K562 (cell line): ENCODE measurements at regions of chr17 and their contacts with region 1.

Region 1: DNA sequence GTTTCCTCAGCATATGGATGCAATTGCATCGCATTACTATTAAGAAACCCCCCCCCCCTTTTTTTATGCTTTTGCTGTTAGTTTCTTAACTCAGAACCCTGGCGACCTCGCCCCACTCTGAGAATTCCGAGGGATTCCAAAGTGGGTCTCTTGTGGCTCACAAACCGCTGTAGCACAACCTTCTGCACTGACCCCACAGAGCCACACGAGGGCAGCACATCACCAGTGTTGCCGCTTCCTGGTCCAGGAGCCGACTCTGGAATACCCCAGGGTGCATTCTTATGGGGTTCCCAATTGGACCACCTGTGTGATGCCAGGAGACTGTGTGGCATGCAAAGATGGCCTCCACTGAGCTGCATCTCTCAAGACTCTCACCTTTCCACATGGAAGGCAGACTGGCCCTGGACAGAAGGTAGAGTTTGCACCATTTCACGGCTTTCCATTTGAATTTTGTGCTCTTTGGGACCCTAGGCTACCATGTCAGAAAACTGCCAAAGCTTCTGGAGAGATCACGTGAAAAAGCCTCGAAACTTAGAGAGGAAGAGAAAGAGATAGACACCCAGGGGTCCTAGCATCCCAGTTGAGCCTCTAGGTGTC is 432.7 kb upstream of the ASIC2 start:
- DNase-seq: peak; percentile 66 to 75 (median 67)
- ATAC-seq: peak; percentile 85
- H3K4me3 ChIP-seq: no peak overlapping the region
- H3K27ac ChIP-seq: no peak overlapping the region
- H3K4me1 ChIP-seq: no peaks in the 10 kb centered on the region
- H3K27me3 ChIP-seq: peaks cover 0 to 7% of the 10 kb centered on the region in 2 experiments; a peak in 1 of 5 replicates
- CTCF ChIP-seq: peak; percentile 82 to 84 (median 83)
- EP300 ChIP-seq: no peak
- POLR2A ChIP-seq: no peak
- RAD21 ChIP-seq: peak; percentile 55 to 71

Region 2: GRCh38 chr17:33750943-33751701 is 25.3 kb after region 1 on chr17:
- CTCF ChIA-PET with region 1: interaction called, 16 read pairs
- POLR2A ChIA-PET with region 1: no interaction called
- in situ Hi-C with region 1: no loop called
- intact Hi-C with region 1: loop called (anchors 1 kb)
- DNase-seq: peak; percentile 51 to 67 (median 63)
- ATAC-seq: peak; percentile 84
- H3K4me3 ChIP-seq: no peak overlapping the region
- H3K27ac ChIP-seq: no peak overlapping the region
- H3K4me1 ChIP-seq: no peaks in the 10 kb centered on the region
- H3K27me3 ChIP-seq: no peaks in the 10 kb centered on the region; a peak in 1 of 5 replicates
- CTCF ChIP-seq: peak; percentile 85 to 94 (median 93)
- EP300 ChIP-seq: no peak
- POLR2A ChIP-seq: no peak
- RAD21 ChIP-seq: peak; percentile 69 to 80

Region 3: GRCh38 chr17:33786478-33786877 is 60.7 kb after region 1 on chr17:
- CTCF ChIA-PET with region 1: no interaction called
- POLR2A ChIA-PET with region 1: no interaction called
- in situ Hi-C with region 1: no loop called
- intact Hi-C with region 1: no loop called
- DNase-seq: no peak
- ATAC-seq: no peak
- H3K4me3 ChIP-seq: no peak overlapping the region
- H3K27ac ChIP-seq: no peak overlapping the region
- H3K4me1 ChIP-seq: no peaks in the 10 kb centered on the region; a peak in 2 of 5 replicates
- H3K27me3 ChIP-seq: peaks cover 0 to 5% of the 10 kb centered on the region in 2 experiments; a peak in 1 of 5 replicates
- CTCF ChIP-seq: no peak
- EP300 ChIP-seq: no peak
- POLR2A ChIP-seq: no peak
- RAD21 ChIP-seq: no peak

Region 4: GRCh38 chr17:33798308-33798707 is 72.5 kb after region 1 on chr17:
- CTCF ChIA-PET with region 1: no interaction called
- POLR2A ChIA-PET with region 1: no interaction called
- in situ Hi-C with region 1: no loop called
- intact Hi-C with region 1: no loop called
- DNase-seq: no peak
- ATAC-seq: no peak
- H3K4me3 ChIP-seq: no peak overlapping the region
- H3K27ac ChIP-seq: no peak overlapping the region
- H3K4me1 ChIP-seq: no peaks in the 10 kb centered on the region; a peak in 1 of 5 replicates
- H3K27me3 ChIP-seq: peaks cover 8 to 17% of the 10 kb centered on the region in 2 experiments; a peak in 4 of 5 replicates
- CTCF ChIP-seq: no peak
- EP300 ChIP-seq: no peak
- POLR2A ChIP-seq: no peak
- RAD21 ChIP-seq: no peak